ENCODE measurements at regions of chr9 and their contacts with region 1.

Region 1: GRCh38 chr9:3479514-3480352 is 46.1 kb downstream of the RFX3 start:
- DNase-seq: no peak
- ATAC-seq: peak; percentile 67
- H3K4me3 Mint-ChIP-seq: no peak overlapping the region; the same call in 1 of the 2 replicates
- H3K27ac Mint-ChIP-seq: peak overlapping the region; percentile 66
- H3K4me1 Mint-ChIP-seq: peaks cover 39% of the 10 kb centered on the region
- H3K27me3 Mint-ChIP-seq: no peaks in the 10 kb centered on the region
- CTCF ChIP-seq: no peak

Region 2: DNA sequence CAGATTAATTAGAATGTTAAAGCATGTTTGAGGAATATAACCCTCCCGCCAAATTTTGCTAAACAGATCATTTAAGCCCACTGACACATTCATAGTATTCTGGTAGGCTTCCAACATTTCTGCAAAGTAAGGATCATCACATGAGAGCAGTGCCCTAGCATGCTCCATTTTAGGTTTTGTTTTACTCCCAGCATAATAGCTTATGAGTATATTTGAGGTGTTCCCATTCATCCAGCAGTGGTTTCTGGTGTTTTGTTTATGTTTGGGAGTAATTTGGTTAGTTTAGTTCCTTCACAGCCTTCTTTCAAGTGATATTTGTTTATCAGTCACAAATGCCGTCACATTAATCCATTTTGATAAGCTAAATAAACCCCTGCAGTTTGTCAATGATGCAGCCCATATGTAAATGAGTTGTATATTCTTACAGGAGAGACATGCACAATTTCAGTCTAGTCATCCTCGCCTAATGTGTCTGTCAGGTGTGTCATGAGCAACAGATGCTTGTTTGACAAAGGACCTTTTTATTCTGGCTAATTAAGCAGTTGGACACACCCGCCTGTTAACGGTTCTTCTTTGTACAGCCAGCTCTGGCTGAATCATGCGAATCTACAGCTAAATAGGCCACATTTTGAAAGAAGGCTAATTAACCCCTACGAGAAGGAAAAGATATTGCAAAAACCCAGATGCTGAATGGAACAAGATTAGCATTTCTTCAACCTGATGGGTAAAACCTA is 78.3 kb before region 1 on chr9:
- CTCF ChIA-PET with region 1: no interaction called
- POLR2A ChIA-PET with region 1: no interaction called
- DNase-seq: no peak
- ATAC-seq: no peak
- H3K4me3 Mint-ChIP-seq: no peak overlapping the region; the same call in 1 of the 2 replicates
- H3K27ac Mint-ChIP-seq: peak overlapping the region; percentile 16; the same call in 1 of the 2 replicates
- H3K4me1 Mint-ChIP-seq: peaks cover 39% of the 10 kb centered on the region
- H3K27me3 Mint-ChIP-seq: no peaks in the 10 kb centered on the region
- CTCF ChIP-seq: no peak

Region 3: DNA sequence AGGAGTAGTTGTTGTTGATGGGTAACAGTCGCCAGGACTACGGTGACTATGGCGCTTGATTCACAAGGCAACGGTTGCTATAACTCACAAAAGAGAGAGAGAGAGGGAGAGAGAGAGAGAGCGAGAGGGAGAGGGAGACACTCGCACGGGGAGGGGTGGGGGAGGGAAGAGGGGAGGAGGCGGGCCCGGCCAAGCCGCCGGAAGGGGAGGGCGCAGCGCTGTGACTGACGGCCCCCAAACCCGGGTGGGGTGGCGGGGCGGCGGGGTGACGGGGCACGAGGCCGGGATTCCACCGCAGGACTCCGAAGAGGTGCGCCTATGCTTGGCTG is 46.1 kb after region 1 on chr9 and contains the start of gene RFX3:
- CTCF ChIA-PET with region 1: no interaction called
- POLR2A ChIA-PET with region 1: interaction called, 12 read pairs
- DNase-seq: peak; percentile 77
- ATAC-seq: peak; percentile 68
- H3K4me3 Mint-ChIP-seq: peak within 1 kb of the TSS; percentile 98
- H3K27ac Mint-ChIP-seq: peak within 1 kb of the TSS; percentile 100
- H3K4me1 Mint-ChIP-seq: peaks cover 49% of the 10 kb centered on the region
- H3K27me3 Mint-ChIP-seq: no peaks in the 10 kb centered on the region
- CTCF ChIP-seq: no peak
- total RNA-seq, gene RFX3: 13.3 to 17.5 TPM (median 13.7 TPM) in 3 replicates

Measured in WTC11 (cell line).